ENCODE measurements at regions of chr2 and their contacts with region 1.

Region 1: DNA sequence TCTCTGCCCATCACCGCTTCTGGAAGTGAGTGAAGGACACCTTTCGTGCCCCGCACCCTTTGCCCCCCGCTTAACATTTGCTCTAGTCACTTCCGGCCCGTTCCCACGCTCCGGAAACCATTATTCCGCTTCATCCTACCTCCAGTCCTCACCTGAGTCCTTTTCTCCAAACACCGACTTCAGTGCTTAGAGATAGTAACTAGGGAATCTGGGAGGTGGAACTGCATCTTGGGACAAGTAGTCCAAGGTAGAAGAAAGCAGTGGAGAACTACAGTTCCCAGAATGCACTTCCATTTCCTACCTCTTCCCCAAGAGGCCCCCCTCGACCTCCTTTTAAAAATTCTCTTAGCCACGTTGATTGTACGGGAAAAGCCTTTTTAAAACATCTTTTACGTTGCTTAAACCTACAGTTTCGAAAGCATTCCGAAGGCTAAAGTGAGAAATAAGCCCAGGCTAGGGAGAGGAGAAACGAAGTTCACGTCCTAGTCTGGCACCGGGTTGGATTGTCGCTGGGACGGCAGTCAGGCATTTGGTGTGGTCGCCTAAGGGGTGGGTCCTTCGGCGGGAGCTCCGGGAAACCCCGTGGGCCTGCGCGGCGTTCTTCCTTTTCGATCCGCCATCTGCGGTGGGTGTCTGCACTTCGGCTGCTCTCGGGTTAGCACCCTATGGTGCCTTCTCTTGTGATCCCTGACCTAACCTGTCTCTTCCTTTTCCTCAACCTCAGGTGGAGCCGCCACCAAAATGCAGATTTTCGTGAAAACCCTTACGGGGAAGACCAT is at the starts of genes CLHC1 and RPS27A:
- DNase-seq: peak; percentile 85 to 99 (median 92)
- ATAC-seq: peak; percentile 84 to 90
- H3K4me3 Mint-ChIP-seq: peak within 1 kb of the TSS; percentile 96 to 100 (median 100)
- H3K27ac Mint-ChIP-seq: peak within 1 kb of the TSS; percentile 97 to 100 (median 99)
- H3K4me1 Mint-ChIP-seq: peaks cover 30 to 69% (median 68%) of the 10 kb centered on the region in 4 donors
- H3K27me3 Mint-ChIP-seq: no peaks in the 10 kb centered on the region
- polyA plus RNA-seq, gene CLHC1: 1.8 to 3.5 (median 2.2) TPM
- polyA plus RNA-seq, gene RPS27A: 3,712 to 4,384 (median 4,215) TPM

Region 2: DNA sequence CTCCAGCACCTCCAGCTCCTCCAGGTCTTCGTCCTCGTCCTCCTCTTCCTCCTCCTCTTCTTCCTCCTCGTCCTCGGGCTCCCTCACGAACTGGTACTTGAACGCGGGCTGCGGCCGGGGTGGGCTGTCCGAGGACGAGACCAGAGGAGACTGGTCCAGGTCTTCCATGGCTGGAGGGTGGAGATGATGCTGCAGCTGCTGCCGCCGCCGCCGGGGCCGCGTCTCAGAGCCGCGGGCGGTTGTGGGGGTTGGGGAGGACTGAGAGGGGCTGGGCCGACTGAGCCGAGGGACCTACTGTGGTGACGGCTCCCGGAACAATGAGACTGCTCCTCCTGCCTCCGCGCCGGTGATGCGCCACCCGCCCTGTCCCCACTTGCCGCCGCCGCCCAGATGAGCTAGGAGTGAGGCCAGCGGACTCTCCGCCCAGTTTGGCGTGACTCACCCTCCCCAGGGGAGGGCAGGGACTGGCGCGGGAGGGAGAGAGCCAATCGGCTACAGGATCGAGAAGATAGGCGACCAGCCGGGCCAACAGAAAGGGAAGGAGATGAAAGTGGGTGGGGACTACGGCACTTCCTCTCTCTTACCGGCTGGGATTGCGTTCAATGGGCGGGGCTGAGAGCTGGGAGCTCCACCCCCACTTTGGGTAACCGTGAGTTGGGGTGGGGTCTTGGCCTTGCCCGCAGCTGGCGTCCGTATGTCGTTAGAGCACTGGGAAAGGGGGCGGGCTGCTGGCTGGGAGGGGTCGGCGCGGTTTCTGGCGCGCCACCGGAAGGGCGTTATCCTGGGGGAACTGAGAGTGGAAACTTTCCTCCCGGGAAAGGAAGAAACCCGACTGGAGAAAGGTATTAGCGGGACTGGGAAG is 181.9 kb before region 1 on chr2 and contains the start of gene RTN4:
- POLR2A ChIA-PET with region 1: interaction called, 14 read pairs
- DNase-seq: peak; percentile 92 to 99 (median 98)
- ATAC-seq: peak; percentile 85 to 90
- H3K4me3 Mint-ChIP-seq: peak within 1 kb of the TSS; percentile 91 to 100 (median 100)
- H3K27ac Mint-ChIP-seq: peak within 1 kb of the TSS; percentile 96 to 100 (median 99)
- H3K4me1 Mint-ChIP-seq: peaks cover 32 to 79% (median 68%) of the 10 kb centered on the region in 4 donors
- H3K27me3 Mint-ChIP-seq: no peaks in the 10 kb centered on the region
- polyA plus RNA-seq, gene RTN4: 68.0 to 77.1 (median 74.2) TPM

Region 3: DNA sequence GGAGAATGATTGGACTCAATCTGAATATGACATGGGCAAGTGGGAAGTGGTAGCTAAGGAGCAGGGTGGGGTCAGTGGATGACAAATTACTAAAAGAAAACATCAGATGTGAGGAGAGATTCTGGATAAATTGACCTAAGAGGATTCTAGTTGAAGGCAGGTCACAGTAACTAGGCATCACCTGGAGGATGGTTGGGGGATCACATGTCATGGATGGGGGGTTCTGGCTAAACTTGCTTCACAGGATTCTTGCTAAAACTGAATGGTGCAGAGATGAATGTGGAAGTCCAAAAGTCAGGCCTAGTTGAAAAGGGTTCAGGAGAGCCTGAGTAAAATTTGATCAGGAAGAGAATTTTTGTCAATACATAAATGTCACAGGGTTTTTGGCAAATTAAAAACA is 18.5 kb before region 1 on chr2:
- POLR2A ChIA-PET with region 1: no interaction called
- DNase-seq: no peak
- ATAC-seq: no peak
- H3K4me3 Mint-ChIP-seq: no peak overlapping the region
- H3K27ac Mint-ChIP-seq: peak overlapping the region in 1 of 10 donors; percentile 15
- H3K4me1 Mint-ChIP-seq: peaks cover 0 to 6% (median 0%) of the 10 kb centered on the region in 4 donors
- H3K27me3 Mint-ChIP-seq: no peaks in the 10 kb centered on the region

Region 4: GRCh38 chr2:55268907-55269644 is 36.8 kb after region 1 on chr2 and contains the start of gene MTIF2:
- POLR2A ChIA-PET with region 1: interaction called, 14 read pairs
- DNase-seq: peak; percentile 71 to 90 (median 80)
- ATAC-seq: peak; percentile 89 to 91
- H3K4me3 Mint-ChIP-seq: peak within 1 kb of the TSS; percentile 89 to 99 (median 96)
- H3K27ac Mint-ChIP-seq: peak within 1 kb of the TSS; percentile 93 to 98 (median 97)
- H3K4me1 Mint-ChIP-seq: peaks cover 10 to 27% (median 25%) of the 10 kb centered on the region in 4 donors
- H3K27me3 Mint-ChIP-seq: no peaks in the 10 kb centered on the region
- polyA plus RNA-seq, gene MTIF2: 15.6 to 20.6 (median 16.8) TPM

Region 5: DNA sequence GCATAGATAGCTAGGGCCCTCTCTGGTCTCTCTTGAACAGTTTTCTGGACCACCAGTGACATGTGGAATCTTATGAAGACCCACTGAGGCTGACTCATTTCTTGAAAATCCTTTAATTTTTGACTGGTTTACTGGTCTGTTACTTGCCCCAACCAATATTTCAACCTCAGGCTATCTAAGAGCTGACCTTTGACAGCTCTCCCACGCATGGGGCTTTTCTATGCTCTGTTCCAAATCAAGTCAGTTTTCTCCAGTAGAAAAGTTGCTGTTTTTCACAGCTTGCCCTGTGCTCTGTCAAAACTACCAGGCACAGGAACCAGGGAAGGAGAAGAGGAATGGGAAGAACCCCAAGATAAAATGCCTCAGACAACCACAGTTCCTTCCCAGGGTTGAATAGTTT is 82.7 kb after region 1 on chr2:
- POLR2A ChIA-PET with region 1: no interaction called
- DNase-seq: no peak
- ATAC-seq: no peak
- H3K4me3 Mint-ChIP-seq: no peak overlapping the region
- H3K27ac Mint-ChIP-seq: peak overlapping the region in 1 of 10 donors; percentile 29
- H3K4me1 Mint-ChIP-seq: no peaks in the 10 kb centered on the region
- H3K27me3 Mint-ChIP-seq: no peaks in the 10 kb centered on the region

Region 6: DNA sequence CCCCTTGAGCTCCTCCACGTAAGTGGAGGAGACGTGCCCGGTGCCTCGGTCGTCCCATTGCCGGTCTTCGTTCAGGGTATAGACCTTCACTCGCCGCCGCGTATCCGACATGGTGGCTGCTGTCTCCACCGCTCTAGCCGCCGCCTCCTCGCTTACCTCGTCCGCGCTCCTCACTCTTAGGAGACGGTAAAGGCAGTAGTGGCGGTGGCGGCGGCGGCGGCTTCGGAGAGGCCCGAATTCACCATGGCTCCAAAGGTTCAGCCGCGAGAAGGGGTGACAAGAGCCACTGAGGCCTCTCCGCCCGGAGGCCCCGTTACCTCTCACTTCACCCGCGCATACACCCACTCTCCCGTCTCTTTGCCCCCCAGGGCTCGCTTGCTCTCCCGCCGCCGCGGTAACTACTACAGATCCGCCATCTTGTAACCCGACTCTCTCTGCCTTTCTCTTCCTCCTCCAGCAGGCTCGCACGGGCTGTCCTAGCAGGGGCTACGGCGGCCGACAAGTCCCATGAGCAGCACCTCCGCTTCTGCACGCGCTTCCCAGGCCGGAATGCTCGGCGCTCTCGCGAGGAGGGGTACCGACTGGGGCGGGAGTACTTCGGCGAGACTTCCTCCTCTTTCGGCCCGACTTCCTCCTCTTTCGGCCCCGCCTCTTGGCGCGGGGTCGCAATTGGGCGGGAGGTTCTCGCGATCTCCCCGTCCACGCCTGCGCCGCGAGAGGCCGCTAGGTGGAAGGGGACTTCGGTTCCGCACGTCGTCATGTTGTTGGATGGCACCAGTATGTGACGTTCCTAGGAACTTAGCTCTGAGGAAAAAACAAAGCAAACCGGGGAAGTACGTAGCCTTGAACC is 385.1 kb after region 1 on chr2 and contains the start of gene PPP4R3B:
- POLR2A ChIA-PET with region 1: interaction called, 11 read pairs
- DNase-seq: peak; percentile 92 to 100 (median 99)
- ATAC-seq: peak; percentile 83 to 86
- H3K4me3 Mint-ChIP-seq: no peak within 1 kb of the TSS
- H3K27ac Mint-ChIP-seq: no peak within 1 kb of the TSS
- H3K4me1 Mint-ChIP-seq: peaks cover 12 to 56% (median 28%) of the 10 kb centered on the region in 4 donors
- H3K27me3 Mint-ChIP-seq: no peaks in the 10 kb centered on the region
- polyA plus RNA-seq, gene PPP4R3B: 59.2 to 75.2 (median 66.3) TPM

Measured in naive thymus-derived CD8-positive, alpha-beta T cell (primary cell).